BJ (cell line): ENCODE measurements at regions of chr2 and their contacts with region 1.

Region 1: DNA sequence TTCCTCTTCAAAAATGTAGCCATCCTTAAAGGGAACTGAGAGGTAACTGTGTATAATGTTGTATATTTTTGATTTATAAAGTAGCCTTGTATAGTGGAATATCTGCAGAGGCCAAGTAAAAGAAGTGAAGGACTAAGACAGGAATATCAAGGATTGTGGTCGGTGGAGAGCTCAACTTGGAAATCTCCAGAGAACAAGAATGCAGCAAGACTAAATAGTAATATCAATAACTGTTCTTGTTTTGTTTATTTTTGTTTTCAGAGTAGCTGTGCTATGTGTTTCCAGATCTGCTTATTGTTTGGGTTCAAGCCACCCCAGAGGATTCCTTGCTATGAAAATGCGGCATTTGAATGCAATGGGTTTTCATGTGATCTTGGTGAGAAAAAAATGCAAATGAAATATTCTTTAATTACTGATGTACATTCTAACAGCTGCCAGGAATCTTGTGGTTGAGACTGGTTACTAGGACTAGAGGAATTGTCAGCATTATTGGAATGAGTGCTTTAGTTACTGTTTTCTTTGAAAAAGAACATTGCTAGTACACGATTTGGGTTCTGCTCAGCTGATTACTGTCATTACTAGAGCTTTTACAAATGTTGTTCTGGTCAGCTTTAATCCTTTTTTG is 25.0 kb downstream of the FASTKD2 start:
- DNase-seq: no peak
- H3K4me3 ChIP-seq: no peak overlapping the region
- H3K27me3 ChIP-seq: no peaks in the 10 kb centered on the region
- CTCF ChIP-seq: no peak

Region 2: DNA sequence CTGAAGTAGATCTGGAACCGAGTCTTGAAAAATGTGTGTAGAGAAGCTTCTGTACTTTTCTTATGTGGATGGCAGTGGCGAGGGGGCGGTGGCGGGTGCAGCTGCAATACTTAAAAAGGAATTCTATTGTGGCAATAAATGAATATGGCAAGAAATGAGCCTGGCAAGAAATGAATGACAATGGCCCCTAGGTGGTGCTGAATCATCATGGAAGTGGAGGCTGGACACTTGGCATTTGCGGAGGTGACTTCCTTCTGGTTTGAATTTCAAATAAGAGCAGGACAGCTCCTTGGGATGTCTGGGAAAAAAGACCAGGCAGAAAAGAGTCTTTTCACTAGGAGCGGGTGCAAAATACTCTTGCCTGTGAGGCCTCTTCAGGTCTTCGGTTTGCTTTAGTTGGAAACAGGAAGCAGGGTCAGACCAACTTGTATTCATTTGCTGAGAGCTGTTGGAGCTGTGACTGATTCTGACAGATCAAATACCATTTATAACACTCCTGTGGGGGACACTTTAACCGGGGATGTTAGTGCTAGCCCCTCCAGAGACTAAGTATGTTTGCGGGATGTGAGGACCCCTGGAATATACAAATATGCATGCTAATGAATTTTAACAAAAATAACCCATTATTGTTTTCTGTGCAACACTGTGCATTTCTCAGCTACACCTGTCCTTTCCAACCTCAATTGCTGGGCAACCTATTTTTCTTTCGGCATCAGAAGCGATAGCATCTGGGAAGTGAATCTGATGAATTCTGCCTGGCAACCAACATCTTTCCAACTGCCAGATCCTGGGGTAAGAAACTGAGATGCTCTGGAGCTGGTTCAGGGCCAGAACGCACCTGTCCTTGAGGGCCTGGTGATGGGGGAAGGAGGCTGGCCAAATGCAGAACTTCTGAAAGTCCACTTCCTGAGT is 10.3 kb after region 1 on chr2:
- CTCF ChIA-PET with region 1: interaction called, 24 read pairs
- POLR2A ChIA-PET with region 1: no interaction called
- DNase-seq: peak; percentile 20
- H3K4me3 ChIP-seq: no peak overlapping the region
- H3K27me3 ChIP-seq: no peaks in the 10 kb centered on the region
- CTCF ChIP-seq: peak; percentile 68